MCF 10A (cell line): ENCODE measurements at regions of chr11 and their contacts with region 1.

Region 1: DNA sequence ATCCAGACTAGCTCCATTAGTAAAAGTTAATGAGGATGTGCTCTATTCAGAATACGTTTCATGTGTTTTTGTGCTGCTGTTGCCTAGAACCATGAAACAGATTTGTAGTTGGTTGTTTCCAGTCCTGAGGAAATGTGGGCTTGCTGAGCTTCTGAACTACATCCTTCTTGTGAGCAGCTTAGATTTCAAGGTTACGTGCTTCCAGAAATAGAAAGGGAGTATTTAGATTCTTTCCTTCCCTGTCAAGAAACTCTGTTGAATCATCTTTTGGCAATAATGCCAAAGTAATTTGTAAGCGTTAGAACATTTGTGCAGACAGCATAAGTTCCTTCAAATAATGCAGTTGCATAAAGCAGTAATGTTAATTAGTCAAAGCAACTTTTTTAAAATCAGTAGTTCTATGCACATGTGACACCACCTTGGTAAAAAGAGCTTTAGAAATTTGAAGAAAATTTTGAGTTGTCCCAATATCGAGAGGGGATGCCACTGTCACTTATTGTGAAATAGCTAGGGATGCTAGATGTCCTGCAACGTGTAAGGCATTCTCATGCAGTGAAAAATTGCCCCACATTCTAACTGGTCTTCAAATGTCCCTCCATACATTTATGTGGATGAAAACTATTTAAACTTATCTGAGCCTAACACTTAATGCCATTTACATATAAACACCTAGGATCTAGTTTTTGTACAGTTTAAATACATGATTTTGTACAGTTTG is 169.6 kb downstream of the ETS1 start:
- DNase-seq: peak; percentile 54
- H3K4me3 Mint-ChIP-seq: no peak overlapping the region
- H3K27ac Mint-ChIP-seq: no peak overlapping the region
- H3K4me1 Mint-ChIP-seq: peaks cover 9% of the 10 kb centered on the region
- H3K27me3 Mint-ChIP-seq: no peaks in the 10 kb centered on the region
- CTCF ChIP-seq: no peak

Region 2: DNA sequence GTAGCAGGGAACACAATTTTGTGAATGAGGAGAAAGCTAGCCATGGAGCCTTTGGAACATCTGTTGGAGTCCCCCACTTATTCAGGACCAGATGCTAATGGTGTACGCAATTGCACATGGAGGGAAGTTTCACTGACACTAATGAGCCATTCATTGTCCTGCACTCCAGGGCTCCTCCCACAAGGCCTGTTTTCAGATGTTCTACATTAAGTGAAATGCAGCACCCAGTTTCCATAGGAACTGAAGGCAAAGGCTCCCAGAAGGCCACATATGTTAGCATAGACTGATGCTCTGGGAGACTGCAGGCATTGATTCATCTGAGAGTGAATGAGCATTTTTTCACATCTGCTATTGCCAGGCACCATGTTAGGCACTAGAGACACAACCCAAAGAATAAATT is 229.9 kb before region 1 on chr11:
- CTCF ChIA-PET with region 1: no interaction called
- POLR2A ChIA-PET with region 1: no interaction called
- intact Hi-C with region 1: no loop called
- DNase-seq: no peak
- H3K4me3 Mint-ChIP-seq: no peak overlapping the region
- H3K27ac Mint-ChIP-seq: peak overlapping the region; percentile 30
- H3K4me1 Mint-ChIP-seq: peaks cover 6% of the 10 kb centered on the region
- H3K27me3 Mint-ChIP-seq: no peaks in the 10 kb centered on the region
- CTCF ChIP-seq: no peak

Region 3: GRCh38 chr11:128405714-128406662 is 11.8 kb before region 1 on chr11:
- CTCF ChIA-PET with region 1: interaction called, 3 read pairs
- POLR2A ChIA-PET with region 1: interaction called, 10 read pairs
- intact Hi-C with region 1: no loop called
- DNase-seq: no peak
- H3K4me3 Mint-ChIP-seq: no peak overlapping the region
- H3K27ac Mint-ChIP-seq: no peak overlapping the region
- H3K4me1 Mint-ChIP-seq: peaks cover 34% of the 10 kb centered on the region
- H3K27me3 Mint-ChIP-seq: no peaks in the 10 kb centered on the region
- CTCF ChIP-seq: no peak

Region 4: GRCh38 chr11:128725630-128726319 is 308.0 kb after region 1 on chr11:
- CTCF ChIA-PET with region 1: no interaction called
- POLR2A ChIA-PET with region 1: no interaction called
- intact Hi-C with region 1: no loop called
- DNase-seq: peak; percentile 57
- H3K4me3 Mint-ChIP-seq: no peak overlapping the region
- H3K27ac Mint-ChIP-seq: no peak overlapping the region
- H3K4me1 Mint-ChIP-seq: peaks cover 18% of the 10 kb centered on the region
- H3K27me3 Mint-ChIP-seq: no peaks in the 10 kb centered on the region
- CTCF ChIP-seq: no peak